Aorta (tissue), 5 donors: ENCODE measurements at regions of chr7 and their contacts with region 1.

Region 1: DNA sequence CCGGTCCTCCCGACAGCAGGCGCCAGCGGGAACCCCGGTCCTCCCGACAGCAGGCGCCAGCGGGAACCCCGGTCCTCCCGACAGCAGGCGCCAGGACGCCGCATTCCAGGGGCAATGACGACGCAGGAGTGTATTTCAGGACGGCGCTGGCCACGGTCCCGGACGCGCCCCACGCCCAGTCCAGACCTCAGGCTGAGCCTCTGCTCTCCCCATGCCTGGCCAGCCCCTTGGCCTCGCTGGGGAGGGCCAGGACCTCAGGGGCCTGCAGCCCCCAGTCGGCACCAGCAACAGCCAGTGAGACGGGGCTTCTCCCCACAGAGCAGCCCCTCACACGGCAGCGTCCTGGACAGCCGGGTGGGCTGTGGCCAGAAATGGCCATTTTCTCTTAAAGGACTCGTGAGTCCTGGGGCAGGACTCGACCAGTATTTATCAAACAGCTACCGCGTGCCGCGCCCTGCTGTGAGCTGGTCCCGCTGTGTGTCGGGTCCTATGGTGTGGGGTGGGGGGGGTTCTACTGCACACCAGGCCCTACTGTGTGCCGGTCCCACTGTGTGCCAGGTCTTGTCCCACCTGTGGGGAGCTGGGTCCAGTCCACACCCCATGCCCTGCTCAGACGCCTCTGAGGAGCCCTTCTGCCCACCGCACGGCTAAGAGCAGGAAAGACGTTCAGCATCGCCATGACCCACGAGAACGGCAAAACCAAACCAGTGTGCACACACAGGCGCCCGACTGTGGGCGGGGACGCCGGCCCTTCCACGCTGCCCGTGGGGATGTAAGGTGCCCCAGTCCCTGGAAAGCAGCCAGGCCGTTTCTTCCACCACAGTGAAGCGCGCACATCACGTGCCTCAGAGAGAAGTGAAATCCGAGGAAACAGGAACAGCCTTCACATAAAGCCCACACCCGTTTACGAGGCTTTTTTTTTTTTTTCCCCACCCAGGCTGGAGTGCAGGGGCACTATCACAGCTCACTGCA is 33.3 kb downstream of the GET4 start:
- DNase-seq: peak; percentile 89 to 93
- ATAC-seq: peak; percentile 62
- H3K4me3 ChIP-seq: no peak overlapping the region
- H3K27ac ChIP-seq: no peak overlapping the region
- H3K4me1 ChIP-seq: no peaks in the 10 kb centered on the region
- H3K27me3 ChIP-seq: no peaks in the 10 kb centered on the region

Region 2: DNA sequence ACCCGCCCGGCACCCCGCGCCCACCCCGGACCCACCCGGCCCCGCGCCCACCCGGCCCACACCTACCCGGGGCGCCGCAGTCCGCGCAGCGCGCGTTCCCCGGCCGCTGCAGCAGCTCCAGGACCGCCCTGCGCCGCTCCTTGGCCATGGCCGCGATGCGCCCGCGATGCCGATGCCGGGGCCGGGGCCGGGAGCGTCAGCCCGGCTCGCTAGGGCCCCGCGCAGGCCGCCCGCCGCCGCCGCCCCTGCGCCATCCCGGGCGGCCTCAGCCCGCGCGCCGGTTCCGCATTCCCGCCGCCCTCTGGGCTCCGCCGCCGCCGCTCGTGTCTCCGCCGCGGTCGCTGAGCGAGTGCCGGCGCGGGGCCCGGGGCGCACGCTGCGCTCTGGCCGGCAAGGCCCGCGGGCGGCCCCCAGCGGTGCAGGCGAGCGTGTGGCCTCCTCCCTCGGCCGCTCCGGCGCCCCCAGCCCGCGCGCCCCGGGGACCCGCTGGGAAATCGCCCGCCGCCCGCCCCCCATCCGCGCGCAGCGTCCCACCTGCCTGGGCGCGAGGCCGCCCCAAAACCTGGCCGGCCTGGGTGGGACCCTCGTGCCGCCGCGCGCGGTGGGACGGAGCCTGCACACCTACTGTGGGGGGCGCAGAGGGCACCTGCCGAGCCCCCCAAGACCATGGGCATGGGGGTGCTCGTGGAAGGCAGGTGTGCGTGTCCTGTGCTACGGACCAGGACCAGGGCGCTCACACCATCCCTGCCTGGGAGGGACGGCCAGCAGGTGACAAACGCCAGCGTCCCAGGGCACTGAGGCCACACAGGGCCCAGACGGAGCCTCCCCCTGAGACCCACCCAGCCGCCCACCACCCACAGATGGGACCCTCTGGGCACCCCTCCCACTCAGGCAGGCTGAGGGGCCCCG is 44.9 kb after region 1 on chr7 and contains the start of gene ADAP1:
- intact Hi-C with region 1: loop called in 1 of 2 experiments (anchors 5 kb)
- DNase-seq: peak; percentile 68 to 84
- ATAC-seq: peak; percentile 5
- H3K4me3 ChIP-seq: peak within 1 kb of the TSS; percentile 58 to 67
- H3K27ac ChIP-seq: peak within 1 kb of the TSS in 1 of 2 donors; percentile 7
- H3K4me1 ChIP-seq: no peaks in the 10 kb centered on the region
- H3K27me3 ChIP-seq: no peaks in the 10 kb centered on the region
- total RNA-seq, gene ADAP1: 10.8 to 11.9 TPM

Region 3: DNA sequence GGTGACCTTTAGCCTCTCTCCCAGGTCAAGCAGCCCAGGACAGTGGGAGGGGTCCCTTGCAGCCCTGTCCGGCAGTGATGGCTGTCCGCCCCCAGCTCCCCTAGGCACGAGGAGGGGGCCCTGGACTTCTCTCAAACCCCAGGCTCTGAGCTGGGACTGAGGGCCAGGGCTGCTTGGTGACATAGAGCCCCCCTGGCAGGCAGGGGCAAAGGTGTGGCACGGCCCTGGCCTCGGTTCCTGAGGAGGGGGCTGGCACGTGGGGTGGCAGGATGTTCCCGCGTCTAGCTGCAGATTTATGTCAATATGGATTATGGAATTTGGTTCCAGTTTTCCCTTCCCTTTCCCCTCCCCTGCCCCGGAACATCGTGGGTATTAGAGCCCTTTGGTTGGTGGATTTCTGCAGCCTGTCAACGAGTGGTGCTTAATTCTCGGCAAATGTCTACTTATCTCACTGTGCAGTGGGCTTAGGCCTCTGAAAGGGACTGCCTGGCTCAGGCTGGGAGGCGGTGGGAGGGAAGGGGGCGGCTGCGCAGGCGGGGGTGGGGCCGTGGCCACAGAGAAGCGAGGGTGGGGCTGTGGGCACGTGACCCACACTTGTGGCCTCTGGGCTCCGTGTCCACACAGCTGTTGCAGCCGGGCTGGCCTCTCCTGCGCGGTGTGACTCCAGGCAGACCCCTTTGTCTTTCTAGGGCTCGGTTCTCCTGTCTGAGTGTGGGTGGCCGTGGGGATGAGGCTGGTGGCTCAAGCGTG is 342.3 kb after region 1 on chr7:
- intact Hi-C with region 1: no loop called
- DNase-seq: peak in 1 of 2 donors; percentile 9
- ATAC-seq: no peak
- H3K4me3 ChIP-seq: no peak overlapping the region
- H3K27ac ChIP-seq: no peak overlapping the region
- H3K4me1 ChIP-seq: no peaks in the 10 kb centered on the region
- H3K27me3 ChIP-seq: no peaks in the 10 kb centered on the region